ENCODE measurements at regions of chr12 and their contacts with region 1.

Region 1: DNA sequence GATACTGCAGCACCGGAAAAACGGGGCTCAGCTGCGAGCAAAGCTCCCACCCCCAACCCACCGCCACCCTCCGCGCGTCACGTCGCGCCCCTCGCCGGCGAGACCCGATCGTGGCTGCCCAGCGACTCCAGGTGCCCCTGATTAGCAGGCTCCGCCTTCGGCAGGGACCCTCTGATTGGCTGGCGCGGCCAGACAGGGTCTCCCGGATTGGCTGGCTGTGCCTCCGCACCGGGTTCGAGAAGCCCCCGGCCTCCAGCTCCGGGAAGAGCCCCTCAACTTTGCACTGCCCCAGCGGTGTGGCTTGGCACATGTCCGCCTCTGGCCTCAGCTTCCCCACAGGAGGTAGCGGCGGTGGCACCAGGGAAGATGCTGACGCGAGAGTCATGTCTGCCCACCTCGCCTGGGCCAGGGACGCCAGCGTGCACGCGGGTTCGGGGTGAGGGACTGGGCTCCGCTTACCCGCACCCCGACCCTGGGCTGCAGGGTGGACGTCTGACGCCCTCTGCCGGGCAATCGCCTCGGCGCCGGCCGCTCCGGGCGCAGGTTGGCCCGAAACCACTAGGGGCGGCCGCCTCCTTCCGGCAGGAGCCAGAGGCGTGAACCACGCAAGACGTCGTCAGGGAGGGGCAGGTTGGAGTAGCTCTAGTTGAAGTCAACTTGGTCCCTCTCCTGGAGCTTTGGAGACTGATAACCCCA is 498 bp upstream of the RHOF start:
- DNase-seq: peak; percentile 98
- ATAC-seq: peak; percentile 63
- H3K4me3 Mint-ChIP-seq: peak overlapping the region; percentile 96
- H3K27ac Mint-ChIP-seq: peak overlapping the region; percentile 92
- H3K4me1 Mint-ChIP-seq: peaks cover 56% of the 10 kb centered on the region
- H3K27me3 Mint-ChIP-seq: no peaks in the 10 kb centered on the region

Region 2: GRCh38 chr12:120194534-120195395 is 1599.2 kb before region 1 on chr12 and contains the start of gene GCN1:
- CTCF ChIA-PET with region 1: no interaction called
- POLR2A ChIA-PET with region 1: no interaction called
- intact Hi-C with region 1: loop called in 1 of 2 experiments (anchors 10 kb)
- DNase-seq: peak; percentile 93
- ATAC-seq: peak; percentile 81
- H3K4me3 Mint-ChIP-seq: peak within 1 kb of the TSS; percentile 98
- H3K27ac Mint-ChIP-seq: peak within 1 kb of the TSS; percentile 92
- H3K4me1 Mint-ChIP-seq: peaks cover 45% of the 10 kb centered on the region
- H3K27me3 Mint-ChIP-seq: no peaks in the 10 kb centered on the region
- total RNA-seq, gene GCN1: 125 to 139 TPM

Region 3: DNA sequence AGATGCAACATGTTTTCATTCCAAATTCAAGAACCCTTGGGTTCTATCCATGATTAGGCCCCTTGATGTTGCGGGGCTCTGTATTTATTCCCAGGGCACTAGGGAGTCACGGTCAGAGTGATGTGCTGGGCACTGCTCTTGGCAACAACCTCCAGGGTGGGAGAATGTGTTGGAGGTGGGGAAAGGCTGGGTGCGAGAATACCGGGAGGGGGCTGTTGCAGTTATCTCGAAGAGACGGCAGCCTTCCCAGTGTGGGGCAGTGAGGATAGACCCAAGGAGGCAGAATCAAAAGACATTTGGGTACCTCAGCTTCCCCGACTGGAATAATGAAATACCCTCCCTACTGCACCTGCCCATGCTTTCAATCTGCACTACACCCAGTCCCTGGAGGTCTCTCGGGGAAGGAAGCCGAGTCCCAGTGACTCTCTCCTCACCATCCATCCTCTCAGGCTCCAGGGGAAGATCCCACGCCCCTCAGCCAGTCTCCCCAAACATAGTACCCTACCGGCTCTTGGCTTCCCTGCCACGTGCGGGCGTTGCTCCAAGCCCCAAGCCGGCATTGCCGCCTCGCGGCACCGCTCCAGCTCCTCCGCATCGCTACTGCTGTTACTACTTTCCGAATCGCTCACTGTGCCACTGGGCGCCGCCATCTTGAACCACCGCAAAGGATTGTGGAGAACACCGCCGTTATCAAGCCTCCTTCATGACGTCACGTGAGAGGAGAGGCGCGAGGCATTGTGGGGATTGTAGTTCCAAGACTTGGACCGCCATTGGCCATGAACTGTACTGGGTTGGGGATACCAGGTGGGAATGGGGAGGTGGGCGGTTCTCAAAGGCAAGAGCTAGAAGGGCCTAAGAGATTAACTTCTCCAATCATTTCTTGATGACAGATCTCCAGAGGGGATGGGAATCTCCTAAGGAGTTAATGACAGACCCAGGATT is 777.9 kb before region 1 on chr12 and contains the start of gene C12orf43:
- CTCF ChIA-PET with region 1: no interaction called
- POLR2A ChIA-PET with region 1: no interaction called
- intact Hi-C with region 1: no loop called
- DNase-seq: peak; percentile 97
- ATAC-seq: peak; percentile 99
- H3K4me3 Mint-ChIP-seq: peak within 1 kb of the TSS; percentile 91
- H3K27ac Mint-ChIP-seq: peak within 1 kb of the TSS; percentile 92
- H3K4me1 Mint-ChIP-seq: peaks cover 16% of the 10 kb centered on the region
- H3K27me3 Mint-ChIP-seq: no peaks in the 10 kb centered on the region
- total RNA-seq, gene C12orf43: 22.8 to 23.8 TPM

Region 4: DNA sequence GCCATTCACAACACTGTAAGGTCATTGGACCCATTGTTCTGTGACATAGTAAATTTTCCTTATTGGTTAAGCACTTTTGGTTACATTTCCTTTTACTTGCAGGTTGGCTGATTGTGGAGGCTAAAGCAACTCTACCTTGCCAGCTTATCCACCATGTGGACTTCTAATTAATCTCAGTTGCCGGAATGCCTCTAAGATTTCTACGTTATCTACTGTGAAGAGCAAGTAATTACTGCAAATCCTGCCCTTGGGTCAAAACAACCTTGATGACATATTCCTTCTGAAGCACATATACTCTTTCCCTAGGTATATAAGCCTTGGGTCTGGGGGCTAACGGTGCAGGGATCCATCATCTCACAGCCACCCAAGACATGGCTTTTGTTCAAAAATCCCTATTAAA is 105.0 kb before region 1 on chr12:
- CTCF ChIA-PET with region 1: interaction called, 24 read pairs
- POLR2A ChIA-PET with region 1: no interaction called
- intact Hi-C with region 1: loop called in 1 of 2 experiments (anchors 1 kb)
- DNase-seq: no peak
- ATAC-seq: no peak
- H3K4me3 Mint-ChIP-seq: no peak overlapping the region
- H3K27ac Mint-ChIP-seq: no peak overlapping the region
- H3K4me1 Mint-ChIP-seq: peaks cover 7% of the 10 kb centered on the region
- H3K27me3 Mint-ChIP-seq: no peaks in the 10 kb centered on the region

Region 5: GRCh38 chr12:121773011-121773777 is 20.8 kb before region 1 on chr12:
- CTCF ChIA-PET with region 1: interaction called, 343 read pairs
- POLR2A ChIA-PET with region 1: no interaction called
- intact Hi-C with region 1: loop called (anchors 1 kb)
- DNase-seq: peak; percentile 90
- ATAC-seq: peak; percentile 83
- H3K4me3 Mint-ChIP-seq: no peak overlapping the region
- H3K27ac Mint-ChIP-seq: peak overlapping the region; percentile 81
- H3K4me1 Mint-ChIP-seq: peaks cover 11% of the 10 kb centered on the region
- H3K27me3 Mint-ChIP-seq: no peaks in the 10 kb centered on the region

Region 6: DNA sequence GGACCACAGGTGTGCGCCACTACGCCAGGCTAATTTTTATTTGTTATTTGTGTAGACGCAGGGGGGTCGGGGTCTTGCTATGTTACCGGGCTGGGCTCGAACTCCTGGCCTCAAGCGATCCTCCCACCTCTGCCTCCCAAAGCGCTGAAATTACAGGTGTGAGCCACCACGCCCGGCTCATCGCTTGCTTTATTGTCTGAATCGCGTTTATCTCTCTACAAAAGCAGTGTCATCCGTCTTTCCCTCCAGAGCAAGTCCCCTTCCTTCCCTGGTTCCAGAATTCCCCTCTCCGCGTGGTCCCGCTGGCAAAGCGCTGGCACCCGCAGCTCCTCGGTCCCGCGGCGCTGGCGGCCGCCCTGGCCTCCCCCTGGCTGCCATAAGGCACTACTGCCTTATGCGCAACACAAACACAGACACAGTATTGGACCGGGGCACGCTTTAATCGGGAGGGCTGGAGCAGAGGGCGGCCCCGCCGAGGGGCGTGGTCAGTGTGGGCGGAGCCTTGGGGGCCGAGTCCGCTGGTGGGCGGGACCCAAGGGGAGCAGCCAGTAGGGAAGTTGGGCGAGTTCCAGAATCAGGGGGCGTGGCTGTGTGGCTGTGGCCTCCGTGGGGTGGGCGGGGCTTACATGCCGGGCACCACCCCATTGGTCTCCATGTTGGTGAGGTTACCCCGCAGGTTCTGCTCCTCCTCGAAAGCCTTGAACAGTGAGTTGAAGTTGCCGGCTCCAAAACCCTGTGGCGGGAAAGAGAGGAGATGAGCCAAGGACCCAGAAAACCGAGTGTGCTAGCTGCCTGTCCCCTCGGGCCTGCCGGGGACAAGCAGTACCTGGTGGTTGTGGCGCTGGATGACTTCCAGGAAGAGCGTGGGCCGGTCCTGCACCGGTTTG is 45.4 kb after region 1 on chr12:
- CTCF ChIA-PET with region 1: interaction called, 17 read pairs
- POLR2A ChIA-PET with region 1: interaction called, 3 read pairs
- intact Hi-C with region 1: loop called (anchors 1 kb)
- DNase-seq: peak; percentile 100
- ATAC-seq: peak; percentile 94
- H3K4me3 Mint-ChIP-seq: peak overlapping the region; percentile 91
- H3K27ac Mint-ChIP-seq: peak overlapping the region; percentile 91
- H3K4me1 Mint-ChIP-seq: peaks cover 14% of the 10 kb centered on the region
- H3K27me3 Mint-ChIP-seq: no peaks in the 10 kb centered on the region

Region 7: DNA sequence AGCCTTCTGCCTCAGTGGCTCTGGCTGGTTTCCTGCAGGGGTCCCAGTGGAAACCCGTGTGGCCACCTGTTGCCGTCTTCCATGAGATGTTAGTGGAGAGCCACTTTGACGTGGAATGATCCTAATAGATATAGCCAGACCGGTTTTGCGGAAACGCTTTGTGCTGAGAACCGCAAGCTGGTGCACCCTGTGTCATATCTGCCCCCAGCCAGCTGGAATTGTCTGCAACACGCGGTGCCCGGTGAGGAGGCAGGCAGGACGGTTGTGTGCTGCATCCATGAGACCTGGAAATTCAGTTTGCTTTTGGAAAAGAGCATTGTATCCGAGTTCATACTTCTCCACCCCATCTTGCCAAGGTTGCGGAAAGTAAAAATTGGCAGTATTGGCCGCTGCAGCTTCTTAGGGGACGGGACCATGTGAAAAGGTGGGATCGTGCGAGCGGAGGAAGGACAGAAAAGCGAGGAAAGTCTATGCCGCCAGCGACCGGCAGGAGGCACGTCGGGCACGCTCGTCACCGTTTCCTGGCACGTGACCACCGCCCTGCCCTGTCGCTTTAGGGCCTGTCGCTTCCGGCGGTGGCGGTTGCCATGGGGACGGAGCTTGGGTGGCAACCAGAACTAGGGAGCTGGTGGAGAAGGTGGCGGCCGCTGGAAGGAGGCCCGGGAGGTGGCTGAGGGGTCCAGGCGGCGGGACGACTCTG is 124.1 kb after region 1 on chr12 and contains the start of gene CFAP251:
- CTCF ChIA-PET with region 1: interaction called, 18 read pairs
- POLR2A ChIA-PET with region 1: no interaction called
- intact Hi-C with region 1: no loop called
- DNase-seq: peak; percentile 99
- ATAC-seq: peak; percentile 99
- H3K4me3 Mint-ChIP-seq: peak within 1 kb of the TSS; percentile 54
- H3K27ac Mint-ChIP-seq: peak within 1 kb of the TSS; percentile 74
- H3K4me1 Mint-ChIP-seq: peaks cover 15% of the 10 kb centered on the region
- H3K27me3 Mint-ChIP-seq: no peaks in the 10 kb centered on the region
- total RNA-seq, gene CFAP251: 0.59 to 0.65 TPM

Region 8: GRCh38 chr12:122060081-122060501 is 266.1 kb after region 1 on chr12:
- CTCF ChIA-PET with region 1: no interaction called
- POLR2A ChIA-PET with region 1: no interaction called
- intact Hi-C with region 1: no loop called
- DNase-seq: no peak
- ATAC-seq: no peak
- H3K4me3 Mint-ChIP-seq: no peak overlapping the region
- H3K27ac Mint-ChIP-seq: no peak overlapping the region
- H3K4me1 Mint-ChIP-seq: peaks cover 5% of the 10 kb centered on the region
- H3K27me3 Mint-ChIP-seq: no peaks in the 10 kb centered on the region